Body of pancreas (tissue), 4 donors: ENCODE measurements at regions of chr5 and their contacts with region 1.

Region 1: DNA sequence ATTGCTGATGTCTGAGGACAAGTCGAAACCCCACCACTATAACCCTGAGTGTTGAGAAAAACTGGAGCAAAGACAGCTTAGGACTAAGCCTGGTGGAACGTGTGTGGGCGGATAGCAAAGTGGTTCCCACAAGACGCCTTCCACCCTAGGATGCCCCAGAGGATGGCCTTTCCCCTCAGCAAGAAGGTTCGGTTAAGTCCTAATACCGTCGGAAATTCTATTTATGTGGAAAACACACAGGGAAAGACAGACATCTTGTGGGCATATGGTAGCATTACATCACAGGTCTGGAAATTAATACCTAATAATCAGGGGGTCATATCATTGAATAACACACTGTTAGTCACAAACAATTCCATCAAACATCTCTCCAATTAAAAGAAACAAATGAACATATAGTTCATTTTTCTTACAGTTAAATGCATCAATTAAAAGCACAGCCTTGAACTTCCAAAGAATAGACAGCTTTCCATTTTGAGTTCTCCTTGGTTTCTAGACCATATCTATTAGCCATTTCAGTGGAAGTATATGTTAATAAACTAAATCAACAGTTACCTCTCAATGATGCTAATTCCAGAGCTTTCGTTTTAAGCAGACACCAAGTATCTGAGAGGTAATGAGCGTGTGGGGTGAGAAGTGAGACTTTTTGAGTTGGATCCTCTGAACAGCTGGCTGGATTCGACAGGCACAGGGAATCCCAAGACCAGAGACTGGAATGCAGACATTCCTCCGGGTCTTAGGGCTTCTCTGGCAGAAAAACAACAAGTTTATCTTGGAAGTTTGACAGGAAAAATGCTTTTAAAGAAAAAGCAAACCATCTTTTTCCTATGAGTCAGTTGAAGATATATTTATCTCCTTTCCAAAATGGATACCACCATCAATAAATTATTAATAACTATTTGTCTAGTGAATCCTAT is 2.9 kb upstream of the ICE1 start:
- DNase-seq: peak in 1 of 4 donors; percentile 39
- ATAC-seq: no peak
- H3K4me3 ChIP-seq: no peak overlapping the region
- H3K27ac ChIP-seq: no peak overlapping the region
- H3K4me1 ChIP-seq: peaks cover 32% of the 10 kb centered on the region
- H3K27me3 ChIP-seq: no peaks in the 10 kb centered on the region
- CTCF ChIP-seq: peak; percentile 18 to 89 (median 71)
- POLR2A ChIP-seq: no peak

Region 2: DNA sequence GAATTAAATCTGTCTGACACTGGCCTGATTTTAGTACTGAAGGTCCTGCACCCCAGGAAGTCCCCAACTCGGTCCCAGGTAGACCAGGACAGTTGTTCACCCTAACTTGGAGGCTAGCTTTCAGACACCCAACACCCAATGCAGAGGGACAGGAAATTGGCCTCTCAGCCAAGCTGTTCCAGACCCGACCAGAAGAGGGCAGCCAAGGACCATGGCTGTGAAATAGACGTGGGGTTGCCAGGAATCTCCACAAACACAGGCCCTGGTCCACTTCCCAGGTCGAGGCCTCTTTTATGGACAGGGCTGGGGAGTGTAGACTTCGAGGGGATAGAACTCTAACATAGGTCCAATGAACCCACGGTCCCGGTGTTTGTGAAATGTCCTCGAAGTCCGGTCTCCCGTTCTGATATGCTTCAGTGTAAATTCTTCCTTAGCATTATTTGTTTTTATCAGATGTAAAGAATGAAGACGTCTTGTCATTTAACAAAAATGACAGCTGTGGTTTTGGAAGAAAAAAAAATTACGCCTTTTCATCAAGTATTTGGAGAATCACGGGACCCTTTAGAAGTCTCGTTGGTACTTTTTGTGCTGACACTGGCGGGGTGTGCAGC is 539.8 kb before region 1 on chr5:
- intact Hi-C with region 1: loop called (anchors 10 kb)
- DNase-seq: peak; percentile 82 to 88 (median 83)
- ATAC-seq: peak; percentile 85
- H3K4me3 ChIP-seq: no peak overlapping the region
- H3K27ac ChIP-seq: no peak overlapping the region
- H3K4me1 ChIP-seq: no peaks in the 10 kb centered on the region
- H3K27me3 ChIP-seq: no peaks in the 10 kb centered on the region
- CTCF ChIP-seq: peak; percentile 89 to 98 (median 94)
- POLR2A ChIP-seq: peak in 1 of 3 donors; percentile 11

Region 3: GRCh38 chr5:5141625-5142532 is 277.7 kb before region 1 on chr5:
- intact Hi-C with region 1: loop called (anchors 5 kb)
- DNase-seq: peak; percentile 63 to 72 (median 68)
- ATAC-seq: no peak
- H3K4me3 ChIP-seq: no peak overlapping the region
- H3K27ac ChIP-seq: no peak overlapping the region
- H3K4me1 ChIP-seq: peaks cover 24% of the 10 kb centered on the region
- H3K27me3 ChIP-seq: no peaks in the 10 kb centered on the region
- CTCF ChIP-seq: peak; percentile 48 to 82 (median 74)
- POLR2A ChIP-seq: no peak

Region 4: GRCh38 chr5:5454391-5454790 is 34.8 kb after region 1 on chr5:
- intact Hi-C with region 1: no loop called
- DNase-seq: peak in 3 of 4 donors; percentile 32 to 59 (median 41)
- ATAC-seq: peak; percentile 58
- H3K4me3 ChIP-seq: no peak overlapping the region
- H3K27ac ChIP-seq: peak overlapping the region in 1 of 4 donors; percentile 27
- H3K4me1 ChIP-seq: no peaks in the 10 kb centered on the region
- H3K27me3 ChIP-seq: no peaks in the 10 kb centered on the region
- CTCF ChIP-seq: no peak
- POLR2A ChIP-seq: no peak